Activated T-helper 2 cell treated with anti-CD3 and anti-CD28 coated beads, Interferon-gamma antibody, Interleukin-2, Interleukin-4, amounts not matched to agents 10 μg/mL and 5 μg/mL and 100 μg/mL, durations not matched to agents 14 hours and 24 hours and 36 hours (primary cell): ENCODE measurements at regions of chr2 and their contacts with region 1.

Region 1: GRCh38 chr2:74833418-74834233 is at the start of gene HK2:
- DNase-seq: peak; percentile 81
- H3K4me3 Mint-ChIP-seq: peak within 1 kb of the TSS; percentile 95
- H3K27ac Mint-ChIP-seq: peak within 1 kb of the TSS; percentile 93
- H3K4me1 Mint-ChIP-seq: peaks cover 45% of the 10 kb centered on the region
- H3K27me3 Mint-ChIP-seq: no peaks in the 10 kb centered on the region
- total RNA-seq, gene HK2: 102 TPM in 2 replicates

Region 2: GRCh38 chr2:74498500-74499266 is 334.9 kb before region 1 on chr2:
- intact Hi-C with region 1: loop called (anchors 10 kb)
- DNase-seq: no peak
- H3K4me3 Mint-ChIP-seq: peak overlapping the region; percentile 86
- H3K27ac Mint-ChIP-seq: peak overlapping the region; percentile 72
- H3K4me1 Mint-ChIP-seq: peaks cover 31% of the 10 kb centered on the region
- H3K27me3 Mint-ChIP-seq: peaks cover 30% of the 10 kb centered on the region

Region 3: DNA sequence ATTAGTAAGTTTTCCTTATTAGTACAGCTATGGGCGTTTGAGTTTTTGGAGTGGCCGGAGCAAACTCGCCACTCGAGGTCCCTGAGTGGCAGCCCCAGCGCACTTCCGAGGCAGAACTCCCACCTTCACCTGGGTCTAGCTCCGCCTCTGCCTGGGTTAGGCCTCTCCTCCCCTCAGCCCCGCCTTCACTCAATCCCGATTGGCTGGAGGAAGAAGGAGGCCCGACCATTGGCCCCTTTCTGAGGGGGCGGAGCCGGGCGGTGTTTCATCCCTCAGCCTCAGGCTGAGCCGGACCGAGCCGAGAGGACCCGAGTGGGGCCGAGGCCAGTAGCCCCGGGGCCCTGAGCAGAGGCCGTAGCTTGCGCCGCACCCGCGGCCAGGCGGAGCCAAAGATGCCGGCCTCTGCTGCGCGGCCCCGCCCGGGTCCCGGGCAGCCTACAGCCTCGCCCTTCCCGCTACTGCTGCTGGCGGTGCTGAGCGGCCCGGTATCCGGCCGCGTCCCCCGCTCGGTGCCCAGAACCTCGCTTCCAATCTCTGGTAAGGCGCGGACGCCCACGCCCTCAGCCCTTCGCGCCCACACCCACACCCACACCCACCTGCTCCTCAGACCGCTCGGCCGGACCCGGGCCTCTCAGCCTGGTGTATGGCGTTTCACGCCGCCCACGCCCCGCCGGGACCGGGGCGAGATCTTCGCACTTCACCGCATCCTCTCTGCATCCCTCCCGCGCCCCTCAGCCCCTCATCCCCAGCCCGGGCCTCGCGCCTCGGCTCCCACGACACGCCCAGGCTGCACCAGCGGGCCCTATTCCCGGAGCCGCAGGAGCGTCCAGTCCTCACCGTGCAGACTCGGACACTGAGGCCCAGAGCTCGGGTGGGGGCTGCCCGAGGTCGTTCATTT is 179.4 kb before region 1 on chr2 and contains the start of gene SEMA4F:
- intact Hi-C with region 1: loop called (anchors 1 kb)
- DNase-seq: peak; percentile 90
- H3K4me3 Mint-ChIP-seq: peak within 1 kb of the TSS; percentile 77
- H3K27ac Mint-ChIP-seq: peak within 1 kb of the TSS; percentile 1
- H3K4me1 Mint-ChIP-seq: peaks cover 20% of the 10 kb centered on the region
- H3K27me3 Mint-ChIP-seq: peaks cover 17% of the 10 kb centered on the region
- total RNA-seq, gene SEMA4F: 5.5 and 7.1 TPM in 2 replicates

Region 4: DNA sequence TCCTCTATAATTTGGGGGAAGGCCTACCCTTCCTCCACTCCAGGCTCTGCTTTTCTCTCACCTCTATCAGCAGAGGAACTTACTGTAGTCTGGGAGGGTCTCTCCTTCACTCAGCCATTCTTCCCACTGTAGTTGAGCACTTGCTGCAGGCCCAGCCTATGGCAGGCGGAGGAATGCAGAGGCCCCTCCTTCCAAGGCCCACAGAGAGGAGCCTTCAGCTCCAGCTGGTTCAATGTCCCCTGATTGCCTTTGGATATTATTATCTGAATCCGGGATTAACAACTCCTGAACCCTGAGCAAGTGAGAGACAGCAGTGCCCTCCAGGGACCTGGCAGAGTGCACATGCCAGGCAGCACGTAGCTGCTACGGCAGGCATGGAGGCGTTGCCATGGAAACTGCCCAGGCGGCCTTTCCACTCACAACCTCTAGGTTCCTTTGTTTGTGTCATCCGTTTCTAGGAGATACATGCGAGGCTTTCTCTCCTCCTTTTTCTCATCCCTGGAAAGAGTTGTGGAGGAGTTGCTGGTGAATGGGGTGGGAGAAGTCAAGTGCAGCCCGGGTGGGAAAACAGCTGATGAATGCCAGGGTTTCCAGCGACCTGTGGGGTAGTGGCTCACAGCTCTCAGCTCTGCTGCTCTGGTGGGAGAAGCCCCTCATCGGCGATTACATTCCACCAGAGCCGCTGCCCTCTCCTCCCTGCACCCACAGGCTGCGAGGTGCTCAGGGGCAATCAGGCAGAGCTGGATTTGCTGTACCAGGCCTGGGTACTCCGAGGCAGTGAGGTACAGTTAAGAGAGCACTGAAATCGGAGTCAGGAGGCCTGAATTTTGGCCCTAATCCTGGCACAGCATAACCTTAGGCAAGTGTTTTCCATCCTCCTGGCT is 55.0 kb before region 1 on chr2:
- intact Hi-C with region 1: loop called (anchors 5 kb)
- DNase-seq: no peak
- H3K4me3 Mint-ChIP-seq: no peak overlapping the region
- H3K27ac Mint-ChIP-seq: no peak overlapping the region
- H3K4me1 Mint-ChIP-seq: peaks cover 36% of the 10 kb centered on the region
- H3K27me3 Mint-ChIP-seq: no peaks in the 10 kb centered on the region

Region 5: GRCh38 chr2:74845217-74846011 is 11.8 kb after region 1 on chr2:
- intact Hi-C with region 1: loop called (anchors 2 kb)
- DNase-seq: no peak
- H3K4me3 Mint-ChIP-seq: peak overlapping the region; percentile 43
- H3K27ac Mint-ChIP-seq: peak overlapping the region; percentile 47
- H3K4me1 Mint-ChIP-seq: peaks cover 88% of the 10 kb centered on the region
- H3K27me3 Mint-ChIP-seq: no peaks in the 10 kb centered on the region

Region 6: GRCh38 chr2:74876081-74876886 is 42.7 kb after region 1 on chr2:
- intact Hi-C with region 1: loop called (anchors 2 kb)
- DNase-seq: peak; percentile 30
- H3K4me3 Mint-ChIP-seq: no peak overlapping the region
- H3K27ac Mint-ChIP-seq: peak overlapping the region; percentile 47
- H3K4me1 Mint-ChIP-seq: peaks cover 3% of the 10 kb centered on the region
- H3K27me3 Mint-ChIP-seq: no peaks in the 10 kb centered on the region

Region 7: GRCh38 chr2:74958274-74959105 is 124.9 kb after region 1 on chr2 and contains the start of gene POLE4:
- intact Hi-C with region 1: loop called (anchors 5 kb)
- DNase-seq: peak; percentile 90
- H3K4me3 Mint-ChIP-seq: peak within 1 kb of the TSS; percentile 79
- H3K27ac Mint-ChIP-seq: peak within 1 kb of the TSS; percentile 86
- H3K4me1 Mint-ChIP-seq: peaks cover 51% of the 10 kb centered on the region
- H3K27me3 Mint-ChIP-seq: no peaks in the 10 kb centered on the region
- total RNA-seq, gene POLE4: 46.1 and 55.3 TPM in 2 replicates